ENCODE measurements at regions of chr3 and their contacts with region 1.

Region 1: GRCh38 chr3:3170998-3171397 is 8.5 kb downstream of the CRBN start:
- DNase-seq: no peak
- ATAC-seq: no peak
- H3K4me3 Mint-ChIP-seq: no peak overlapping the region
- H3K27ac Mint-ChIP-seq: no peak overlapping the region
- H3K4me1 Mint-ChIP-seq: peaks cover 41% of the 10 kb centered on the region
- H3K27me3 Mint-ChIP-seq: no peaks in the 10 kb centered on the region

Region 2: DNA sequence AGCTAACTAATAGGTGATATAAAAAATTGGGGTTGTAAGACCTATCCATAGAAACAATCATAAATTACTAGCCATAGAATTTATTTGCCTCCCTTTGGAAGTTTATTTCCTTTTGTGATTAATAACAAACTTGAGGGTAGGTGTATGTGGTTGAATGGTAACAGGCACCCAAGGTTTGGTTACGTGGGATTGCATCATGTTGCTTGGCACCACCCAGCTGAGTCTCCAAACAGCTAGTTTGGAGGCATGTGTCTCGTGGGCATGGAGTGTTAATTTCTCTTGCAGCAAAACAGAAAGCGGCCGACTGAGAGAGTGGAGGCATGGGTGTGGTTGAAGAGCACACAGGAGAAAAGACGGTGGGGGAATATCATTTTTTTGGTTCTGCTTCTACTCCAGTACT is 630.9 kb before region 1 on chr3:
- CTCF ChIA-PET with region 1: no interaction called
- DNase-seq: no peak
- ATAC-seq: no peak
- H3K4me3 Mint-ChIP-seq: no peak overlapping the region
- H3K27ac Mint-ChIP-seq: no peak overlapping the region
- H3K4me1 Mint-ChIP-seq: no peaks in the 10 kb centered on the region
- H3K27me3 Mint-ChIP-seq: no peaks in the 10 kb centered on the region

Region 3: GRCh38 chr3:3160826-3161225 is 10.2 kb before region 1 on chr3:
- CTCF ChIA-PET with region 1: interaction called, 12 read pairs
- DNase-seq: no peak
- ATAC-seq: no peak
- H3K4me3 Mint-ChIP-seq: no peak overlapping the region
- H3K27ac Mint-ChIP-seq: no peak overlapping the region
- H3K4me1 Mint-ChIP-seq: peaks cover 9% of the 10 kb centered on the region
- H3K27me3 Mint-ChIP-seq: no peaks in the 10 kb centered on the region

Measured in activated CD8-positive, alpha-beta memory T cell treated with anti-CD3 and anti-CD28 coated beads, Interleukin-2, amount 10 ng/mL, durations not matched to agents 7 days and 5 days (primary cell).